Activated naive CD4-positive, alpha-beta T cell treated with anti-CD3 and anti-CD28 coated beads for 36 hours (primary cell): ENCODE measurements at regions of chr20 and their contacts with region 1.

Region 1: GRCh38 chr20:5788385-5788895 is 38.2 kb downstream of the SHLD1 start:
- DNase-seq: peak; percentile 90
- H3K4me3 Mint-ChIP-seq: no peak overlapping the region
- H3K27ac Mint-ChIP-seq: no peak overlapping the region
- H3K4me1 Mint-ChIP-seq: peaks cover 6% of the 10 kb centered on the region
- H3K27me3 Mint-ChIP-seq: no peaks in the 10 kb centered on the region

Region 2: GRCh38 chr20:5539691-5540090 is 248.7 kb before region 1 on chr20:
- CTCF ChIA-PET with region 1: interaction called, 11 read pairs
- intact Hi-C with region 1: no loop called
- DNase-seq: no peak
- H3K4me3 Mint-ChIP-seq: no peak overlapping the region
- H3K27ac Mint-ChIP-seq: no peak overlapping the region
- H3K4me1 Mint-ChIP-seq: peaks cover 6% of the 10 kb centered on the region
- H3K27me3 Mint-ChIP-seq: no peaks in the 10 kb centered on the region

Region 3: GRCh38 chr20:5557123-5557522 is 231.3 kb before region 1 on chr20:
- CTCF ChIA-PET with region 1: interaction called, 23 read pairs
- intact Hi-C with region 1: loop called (anchors 1 kb)
- DNase-seq: peak; percentile 80
- H3K4me3 Mint-ChIP-seq: no peak overlapping the region
- H3K27ac Mint-ChIP-seq: peak overlapping the region; percentile 67
- H3K4me1 Mint-ChIP-seq: peaks cover 4% of the 10 kb centered on the region
- H3K27me3 Mint-ChIP-seq: no peaks in the 10 kb centered on the region

Region 4: DNA sequence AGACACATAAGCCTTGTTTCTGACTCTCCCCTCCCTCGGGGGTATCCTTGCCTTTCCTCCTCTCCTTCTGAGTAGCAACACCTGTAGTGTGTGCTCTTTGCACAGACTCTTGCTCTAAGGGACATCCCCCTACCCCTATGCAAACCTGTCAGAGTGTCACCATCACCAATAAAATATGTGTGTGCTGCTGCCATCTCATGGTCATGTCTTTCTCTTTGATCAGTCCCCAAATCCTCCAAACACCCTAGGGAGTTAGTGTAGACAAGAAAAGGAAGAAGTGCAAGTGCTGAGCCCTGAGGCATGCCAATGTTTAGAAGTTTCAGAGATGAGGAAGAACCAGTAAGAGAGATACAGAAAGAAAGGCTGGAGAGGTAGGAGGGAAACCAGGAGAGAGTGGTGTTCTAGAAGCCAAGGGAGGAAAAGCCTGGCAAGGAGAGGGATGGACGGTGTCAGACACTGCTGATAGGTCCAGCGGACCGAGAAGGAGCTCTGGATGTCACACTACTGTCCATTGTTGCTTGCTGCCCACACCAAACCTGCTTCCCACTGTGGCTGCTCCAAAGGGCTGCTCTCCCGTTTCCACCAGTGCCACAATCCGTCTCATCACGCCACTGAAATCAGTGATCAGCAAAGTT is 145.5 kb after region 1 on chr20:
- CTCF ChIA-PET with region 1: interaction called, 3 read pairs
- intact Hi-C with region 1: loop called (anchors 2 kb)
- DNase-seq: peak; percentile 56
- H3K4me3 Mint-ChIP-seq: no peak overlapping the region
- H3K27ac Mint-ChIP-seq: no peak overlapping the region
- H3K4me1 Mint-ChIP-seq: peaks cover 6% of the 10 kb centered on the region
- H3K27me3 Mint-ChIP-seq: no peaks in the 10 kb centered on the region

Region 5: GRCh38 chr20:6008254-6008653 is 219.8 kb after region 1 on chr20:
- CTCF ChIA-PET with region 1: no interaction called
- intact Hi-C with region 1: loop called (anchors 1 kb)
- DNase-seq: peak; percentile 31
- H3K4me3 Mint-ChIP-seq: no peak overlapping the region
- H3K27ac Mint-ChIP-seq: no peak overlapping the region
- H3K4me1 Mint-ChIP-seq: peaks cover 36% of the 10 kb centered on the region
- H3K27me3 Mint-ChIP-seq: no peaks in the 10 kb centered on the region

Region 6: GRCh38 chr20:6074145-6074561 is 285.7 kb after region 1 on chr20:
- CTCF ChIA-PET with region 1: interaction called, 9 read pairs
- intact Hi-C with region 1: loop called (anchors 2 kb)
- DNase-seq: peak; percentile 9
- H3K4me3 Mint-ChIP-seq: no peak overlapping the region
- H3K27ac Mint-ChIP-seq: no peak overlapping the region
- H3K4me1 Mint-ChIP-seq: peaks cover 2% of the 10 kb centered on the region
- H3K27me3 Mint-ChIP-seq: no peaks in the 10 kb centered on the region